OCI-LY7 (cell line): ENCODE measurements at regions of chr11 and their contacts with region 1.

Region 1: DNA sequence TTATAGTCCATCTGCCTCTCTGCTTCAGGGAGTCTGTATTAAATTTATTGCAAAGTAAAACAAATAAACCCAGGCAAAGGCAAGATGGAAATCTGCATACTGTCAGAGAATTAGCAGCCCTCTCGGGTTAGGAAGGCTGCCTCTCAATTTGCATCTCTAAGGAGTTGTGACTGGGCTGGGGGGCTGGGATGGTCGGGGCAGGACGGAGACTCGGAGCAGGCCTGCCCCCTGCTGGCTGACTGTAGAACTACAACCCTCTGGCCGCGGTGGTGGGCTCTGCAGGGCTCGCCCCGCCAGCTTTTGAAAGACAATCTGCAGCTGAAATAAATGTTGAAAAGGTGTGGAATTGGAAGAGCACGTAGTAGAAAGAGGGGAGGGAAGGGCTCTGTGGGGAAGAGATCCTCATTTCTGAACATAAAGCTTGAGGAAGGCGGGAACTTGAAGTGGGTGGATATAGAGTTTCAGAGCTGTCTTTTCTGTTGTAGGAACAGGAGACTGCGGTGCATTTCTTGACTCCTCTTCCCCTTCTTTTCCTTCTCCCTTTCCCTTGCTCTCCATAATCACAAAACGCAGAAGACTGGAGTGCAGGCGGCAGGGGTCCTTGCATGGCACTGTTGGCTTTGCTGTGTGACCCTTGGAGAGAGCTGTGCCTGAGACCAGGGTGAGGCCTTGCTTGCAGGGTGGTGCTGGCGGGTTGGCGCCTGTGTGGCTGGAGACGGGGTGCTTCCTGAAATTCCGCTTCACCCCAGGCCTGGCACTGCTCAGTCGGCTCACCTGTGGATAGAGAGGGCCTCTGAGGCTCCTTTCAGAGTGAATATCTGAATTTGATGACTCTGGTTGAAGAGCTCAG is 22.6 kb upstream of the PKNOX2 start:
- DNase-seq: peak; percentile 49
- H3K4me3 ChIP-seq: no peak overlapping the region
- H3K27ac ChIP-seq: no peak overlapping the region
- H3K4me1 ChIP-seq: peaks cover 4% of the 10 kb centered on the region
- CTCF ChIP-seq: peak; percentile 98

Region 2: DNA sequence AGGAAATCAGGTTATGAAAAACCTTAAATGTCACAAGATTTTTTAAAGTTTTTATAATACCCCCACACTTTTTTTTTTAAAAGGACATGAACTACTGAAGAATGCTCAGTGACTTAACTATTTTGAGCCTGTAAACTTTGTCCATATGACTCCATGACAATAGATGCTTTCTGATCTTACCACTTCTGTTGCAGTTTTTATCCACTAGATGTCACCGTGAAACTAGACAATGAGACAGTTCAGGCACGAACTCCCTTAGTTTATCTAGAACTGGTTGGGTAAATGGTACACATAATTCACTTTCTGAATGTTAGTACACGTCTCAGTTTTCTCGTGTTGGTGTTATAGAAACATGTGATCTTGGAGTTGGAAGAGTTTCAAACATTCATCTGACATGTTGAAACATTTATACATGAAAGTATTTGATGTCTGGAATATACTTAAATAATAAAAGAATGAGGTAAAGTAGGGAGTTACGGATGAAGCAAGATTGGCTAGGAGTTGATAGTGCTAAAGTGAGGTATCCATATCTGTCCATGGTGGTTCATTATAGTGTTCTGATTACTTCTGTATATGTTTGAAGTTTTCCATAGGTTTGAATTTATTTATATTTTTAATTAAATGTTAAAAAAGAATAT is 179.8 kb before region 1 on chr11:
- CTCF ChIA-PET with region 1: no interaction called
- POLR2A ChIA-PET with region 1: no interaction called
- intact Hi-C with region 1: loop called (anchors 1 kb)
- DNase-seq: peak; percentile 73
- H3K4me3 ChIP-seq: no peak overlapping the region
- H3K27ac ChIP-seq: no peak overlapping the region
- H3K4me1 ChIP-seq: no peaks in the 10 kb centered on the region
- CTCF ChIP-seq: peak; percentile 93

Region 3: DNA sequence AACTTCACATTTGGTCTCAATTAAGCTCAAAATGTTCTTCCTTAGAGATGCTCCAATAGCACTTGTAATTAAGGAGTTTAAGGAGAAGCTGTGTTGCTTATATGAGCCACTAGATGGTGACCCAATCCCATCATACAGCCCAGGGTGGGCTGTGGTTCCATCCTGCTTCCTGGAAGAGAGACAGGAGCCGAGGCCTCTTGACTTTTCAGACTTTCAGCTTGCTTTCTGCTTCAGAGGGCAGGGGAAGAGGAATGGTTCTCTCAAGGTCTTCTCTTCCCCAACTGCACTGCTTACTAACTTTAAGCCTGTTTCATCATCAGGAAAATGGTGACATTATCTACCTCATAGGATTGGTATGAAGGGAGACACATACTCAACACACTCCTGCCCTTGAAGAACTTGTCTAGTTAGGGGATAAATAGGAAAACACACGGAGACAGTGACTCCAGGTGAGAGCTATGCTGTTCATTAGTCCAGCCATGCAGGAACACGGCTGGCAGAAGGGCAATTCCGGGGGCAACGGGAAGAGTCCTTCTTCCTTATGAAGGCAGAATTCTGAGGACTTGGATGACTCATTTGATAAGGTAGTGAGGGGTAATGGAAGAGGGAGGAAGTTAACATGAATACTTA is 50.5 kb before region 1 on chr11:
- CTCF ChIA-PET with region 1: interaction called, 12 read pairs
- POLR2A ChIA-PET with region 1: no interaction called
- intact Hi-C with region 1: loop called (anchors 1 kb)
- DNase-seq: peak; percentile 62
- H3K4me3 ChIP-seq: no peak overlapping the region
- H3K27ac ChIP-seq: no peak overlapping the region
- H3K4me1 ChIP-seq: no peaks in the 10 kb centered on the region
- CTCF ChIP-seq: peak; percentile 86

Region 4: GRCh38 chr11:125360066-125360465 is 218.2 kb after region 1 on chr11:
- CTCF ChIA-PET with region 1: no interaction called
- POLR2A ChIA-PET with region 1: no interaction called
- intact Hi-C with region 1: no loop called
- DNase-seq: no peak
- H3K4me3 ChIP-seq: no peak overlapping the region
- H3K27ac ChIP-seq: no peak overlapping the region
- H3K4me1 ChIP-seq: no peaks in the 10 kb centered on the region
- CTCF ChIP-seq: no peak

Region 5: GRCh38 chr11:125505492-125506080 is 363.7 kb after region 1 on chr11:
- CTCF ChIA-PET with region 1: no interaction called
- POLR2A ChIA-PET with region 1: no interaction called
- intact Hi-C with region 1: no loop called
- DNase-seq: no peak
- H3K4me3 ChIP-seq: no peak overlapping the region
- H3K27ac ChIP-seq: no peak overlapping the region
- H3K4me1 ChIP-seq: no peaks in the 10 kb centered on the region
- CTCF ChIP-seq: no peak